ENCODE measurements at regions of chr9 and their contacts with region 1.

Region 1: GRCh38 chr9:12554636-12555035 is 138.5 kb upstream of the TYRP1 start:
- DNase-seq: no peak
- ATAC-seq: no peak
- H3K4me3 ChIP-seq: no peak overlapping the region
- H3K27ac ChIP-seq: no peak overlapping the region
- H3K4me1 ChIP-seq: no peaks in the 10 kb centered on the region
- H3K27me3 ChIP-seq: no peaks in the 10 kb centered on the region
- CTCF ChIP-seq: peak in 1 of 9 donors; percentile 27

Region 2: DNA sequence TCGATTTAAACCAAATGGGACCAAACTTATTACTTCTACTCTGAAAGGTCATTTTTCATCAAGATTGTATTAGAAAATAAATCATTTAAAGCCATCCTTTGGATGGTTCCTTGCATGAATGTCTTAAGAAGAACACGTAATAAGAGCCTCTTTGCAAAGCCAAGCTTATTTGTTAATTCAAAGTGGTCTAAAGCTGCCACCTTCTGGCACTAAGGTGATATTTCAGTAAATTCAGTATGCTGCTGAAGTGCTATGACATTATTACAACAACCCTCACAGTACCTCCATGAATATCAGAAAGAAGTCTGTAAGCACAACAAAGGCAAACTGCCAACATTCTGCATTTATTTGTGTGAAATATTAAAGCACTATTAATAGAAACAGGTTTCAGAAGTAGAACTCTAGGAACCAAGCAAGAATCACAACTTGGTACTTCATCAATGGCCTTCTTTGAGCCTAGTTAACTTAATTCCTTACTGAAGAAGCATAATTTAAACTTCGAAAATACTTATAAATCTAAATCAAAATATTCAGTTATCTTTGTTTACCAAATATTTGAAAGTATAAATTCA is 85.5 kb after region 1 on chr9:
- intact Hi-C with region 1: loop called in 1 of 10 experiments (anchors 10 kb)
- DNase-seq: no peak
- ATAC-seq: peak in 5 of 8 donors; percentile 34 to 49 (median 39)
- H3K4me3 ChIP-seq: no peak overlapping the region
- H3K27ac ChIP-seq: no peak overlapping the region
- H3K4me1 ChIP-seq: no peaks in the 10 kb centered on the region
- H3K27me3 ChIP-seq: peaks cover 0 to 8% (median 0%) of the 10 kb centered on the region in 7 donors
- CTCF ChIP-seq: peak; percentile 16 to 64 (median 49)

Measured in heart right ventricle (tissue), 16 donors.